OCI-LY7 (cell line): ENCODE measurements at regions of chr11 and their contacts with region 1.

Region 1: DNA sequence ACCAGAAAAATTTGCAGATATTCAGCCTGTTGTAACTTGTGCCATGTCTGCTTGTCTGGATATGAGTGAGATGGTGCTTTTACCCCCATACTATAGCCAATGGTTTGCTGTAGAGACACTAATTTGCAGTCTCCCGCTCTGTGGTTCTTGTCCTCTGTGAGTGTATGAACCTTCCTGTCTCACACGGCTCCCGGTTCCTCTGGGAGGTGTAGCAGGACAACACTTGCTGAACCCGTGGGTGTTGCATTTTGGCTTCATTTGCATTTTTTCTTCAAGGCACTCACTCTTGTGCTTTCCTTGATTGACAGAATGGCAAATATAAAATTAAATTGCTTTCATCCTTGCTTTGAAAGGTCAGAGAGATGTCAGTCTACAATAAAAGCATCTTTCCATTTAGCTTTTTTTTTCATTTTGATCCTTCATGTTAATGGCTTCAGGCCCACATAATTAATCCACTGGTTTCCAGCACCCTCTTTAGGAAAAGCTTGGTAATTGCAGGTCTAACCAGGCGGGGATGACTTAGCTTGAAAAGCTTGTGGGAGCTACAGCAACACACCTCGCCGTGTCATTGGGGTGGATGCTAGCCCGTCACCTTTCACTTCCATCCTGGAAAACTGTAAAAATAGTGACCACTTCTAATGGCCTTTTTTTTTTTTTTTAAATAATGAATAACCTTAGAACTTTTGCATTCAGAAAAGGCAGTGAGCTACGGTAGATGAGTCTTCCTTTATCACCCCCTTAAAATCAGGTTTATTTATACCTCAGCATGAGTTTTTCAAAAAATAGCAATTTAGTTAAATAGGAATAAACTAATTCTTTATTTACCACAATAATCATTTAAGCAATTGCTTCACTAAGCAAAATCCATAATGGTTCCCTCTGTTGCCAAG is 27.4 kb upstream of the ST14 start:
- DNase-seq: peak; percentile 83
- H3K4me3 ChIP-seq: no peak overlapping the region
- H3K27ac ChIP-seq: peak overlapping the region; percentile 51
- H3K4me1 ChIP-seq: peaks cover 23% of the 10 kb centered on the region
- CTCF ChIP-seq: peak; percentile 99

Region 2: GRCh38 chr11:129766898-129767604 is 365.2 kb before region 1 on chr11:
- CTCF ChIA-PET with region 1: no interaction called
- POLR2A ChIA-PET with region 1: no interaction called
- intact Hi-C with region 1: loop called (anchors 10 kb)
- DNase-seq: peak; percentile 52
- H3K4me3 ChIP-seq: no peak overlapping the region
- H3K27ac ChIP-seq: no peak overlapping the region
- H3K4me1 ChIP-seq: no peaks in the 10 kb centered on the region
- CTCF ChIP-seq: peak; percentile 81

Region 3: DNA sequence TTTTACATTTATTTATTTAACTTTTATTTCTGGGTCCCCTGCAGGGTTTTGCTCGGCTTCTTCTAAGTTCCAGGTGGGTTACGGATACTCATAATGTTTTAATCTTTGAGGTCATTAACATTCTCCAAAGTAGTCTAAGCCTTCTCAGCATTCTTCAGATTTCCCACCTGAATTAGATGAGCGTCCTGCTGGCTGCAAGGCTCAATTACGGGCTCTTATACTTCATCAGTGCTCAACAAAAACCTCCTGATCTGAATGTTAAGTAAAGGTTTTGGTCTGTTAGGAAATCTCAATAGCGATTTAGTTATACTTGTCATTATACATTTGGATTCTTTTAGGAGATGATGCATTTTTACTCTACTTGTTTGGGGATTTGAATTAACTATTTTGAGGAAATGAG is 209.5 kb before region 1 on chr11:
- CTCF ChIA-PET with region 1: interaction called, 3 read pairs
- POLR2A ChIA-PET with region 1: interaction called, 9 read pairs
- intact Hi-C with region 1: loop called (anchors 1 kb)
- DNase-seq: no peak
- H3K4me3 ChIP-seq: no peak overlapping the region
- H3K27ac ChIP-seq: no peak overlapping the region
- H3K4me1 ChIP-seq: peaks cover 20% of the 10 kb centered on the region
- CTCF ChIP-seq: no peak

Region 4: DNA sequence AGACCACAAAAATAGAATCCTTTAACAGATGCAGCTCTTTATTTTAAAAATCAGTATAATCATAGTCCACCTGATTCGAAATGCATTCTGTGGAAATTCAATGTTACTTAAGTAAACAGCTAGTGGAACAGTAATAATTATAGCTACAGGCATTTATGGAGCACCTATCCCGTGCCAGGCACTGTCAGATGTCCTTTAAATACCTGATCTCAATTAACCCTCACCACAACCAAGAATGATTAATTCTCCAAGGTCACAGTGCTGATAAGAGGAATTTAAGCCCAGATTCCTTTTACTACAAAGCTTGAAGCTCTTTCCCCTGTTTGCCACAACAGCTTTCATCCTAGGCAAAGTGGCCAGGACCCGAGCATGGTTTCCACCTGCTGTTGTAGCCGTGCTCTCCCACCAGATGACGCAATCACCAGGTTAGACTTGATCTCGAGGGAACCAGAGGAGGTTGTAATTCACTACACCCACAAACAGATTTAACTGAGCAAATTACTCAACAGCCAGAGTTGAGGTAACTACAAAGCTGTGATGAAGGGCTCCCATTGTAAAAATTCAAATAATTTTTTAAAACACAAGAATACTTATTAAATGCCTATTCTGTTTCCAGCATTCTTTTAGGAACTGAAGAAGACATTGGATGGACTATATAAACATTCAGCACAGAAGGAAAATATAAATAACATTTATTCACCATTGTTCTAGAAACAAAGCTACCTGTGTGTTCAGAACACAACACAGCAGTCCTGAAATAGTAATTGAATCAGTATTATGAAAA is 139.9 kb before region 1 on chr11:
- CTCF ChIA-PET with region 1: interaction called, 17 read pairs
- POLR2A ChIA-PET with region 1: interaction called, 15 read pairs
- intact Hi-C with region 1: loop called (anchors 1 kb)
- DNase-seq: peak; percentile 91
- H3K4me3 ChIP-seq: no peak overlapping the region
- H3K27ac ChIP-seq: peak overlapping the region; percentile 45
- H3K4me1 ChIP-seq: peaks cover 56% of the 10 kb centered on the region
- CTCF ChIP-seq: peak; percentile 92

Region 5: DNA sequence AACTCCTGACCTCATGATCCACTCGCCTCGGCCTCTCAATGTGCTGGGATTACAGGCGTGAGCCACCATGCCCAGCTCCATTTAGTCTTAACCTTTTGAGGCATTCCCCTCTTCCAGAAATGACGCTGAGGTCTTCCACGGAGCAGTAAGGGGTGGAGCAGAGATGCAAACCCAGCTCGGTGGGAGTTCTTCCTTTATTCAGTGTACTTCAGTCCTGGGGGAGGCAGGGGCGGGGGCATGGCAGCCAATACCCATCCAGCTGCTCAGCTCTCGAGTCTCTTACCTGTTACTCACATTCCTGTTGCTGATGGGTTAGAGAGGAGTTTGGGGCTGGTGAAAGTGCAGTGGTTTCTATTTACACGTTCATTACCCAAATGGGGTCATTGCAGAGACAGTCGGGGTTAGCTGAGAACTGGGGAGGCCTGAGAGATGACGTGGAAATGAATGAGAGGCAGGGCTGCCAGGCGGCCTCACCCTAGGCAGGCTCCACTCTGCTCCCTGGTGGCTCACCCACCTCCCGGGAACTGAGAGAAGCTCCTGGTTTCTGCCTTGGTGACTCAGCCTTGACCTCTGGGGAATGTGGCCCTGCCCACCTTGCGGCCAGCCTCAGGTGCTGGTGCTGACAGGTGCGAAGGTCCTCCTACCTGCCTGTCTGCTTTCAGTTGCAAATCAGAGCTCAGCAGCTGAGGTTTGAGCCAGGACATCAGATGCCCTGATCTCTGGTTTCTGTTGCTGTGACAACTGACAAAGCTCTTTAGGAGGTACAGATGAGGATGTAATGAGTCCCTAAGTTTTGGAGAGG is 14.0 kb after region 1 on chr11:
- CTCF ChIA-PET with region 1: interaction called, 3 read pairs
- POLR2A ChIA-PET with region 1: interaction called, 12 read pairs
- intact Hi-C with region 1: no loop called
- DNase-seq: no peak
- H3K4me3 ChIP-seq: no peak overlapping the region
- H3K27ac ChIP-seq: peak overlapping the region; percentile 67
- H3K4me1 ChIP-seq: peaks cover 42% of the 10 kb centered on the region
- CTCF ChIP-seq: peak; percentile 64